ENCODE measurements at regions of chr6 and their contacts with region 1.

Region 1: GRCh38 chr6:52647199-52647598 is 23.7 kb upstream of the TMEM14A start:
- DNase-seq: no peak
- ATAC-seq: no peak
- H3K4me3 Mint-ChIP-seq: no peak overlapping the region
- H3K27ac Mint-ChIP-seq: no peak overlapping the region
- H3K4me1 Mint-ChIP-seq: peaks cover 3% of the 10 kb centered on the region
- H3K27me3 Mint-ChIP-seq: peaks cover 37% of the 10 kb centered on the region

Region 2: DNA sequence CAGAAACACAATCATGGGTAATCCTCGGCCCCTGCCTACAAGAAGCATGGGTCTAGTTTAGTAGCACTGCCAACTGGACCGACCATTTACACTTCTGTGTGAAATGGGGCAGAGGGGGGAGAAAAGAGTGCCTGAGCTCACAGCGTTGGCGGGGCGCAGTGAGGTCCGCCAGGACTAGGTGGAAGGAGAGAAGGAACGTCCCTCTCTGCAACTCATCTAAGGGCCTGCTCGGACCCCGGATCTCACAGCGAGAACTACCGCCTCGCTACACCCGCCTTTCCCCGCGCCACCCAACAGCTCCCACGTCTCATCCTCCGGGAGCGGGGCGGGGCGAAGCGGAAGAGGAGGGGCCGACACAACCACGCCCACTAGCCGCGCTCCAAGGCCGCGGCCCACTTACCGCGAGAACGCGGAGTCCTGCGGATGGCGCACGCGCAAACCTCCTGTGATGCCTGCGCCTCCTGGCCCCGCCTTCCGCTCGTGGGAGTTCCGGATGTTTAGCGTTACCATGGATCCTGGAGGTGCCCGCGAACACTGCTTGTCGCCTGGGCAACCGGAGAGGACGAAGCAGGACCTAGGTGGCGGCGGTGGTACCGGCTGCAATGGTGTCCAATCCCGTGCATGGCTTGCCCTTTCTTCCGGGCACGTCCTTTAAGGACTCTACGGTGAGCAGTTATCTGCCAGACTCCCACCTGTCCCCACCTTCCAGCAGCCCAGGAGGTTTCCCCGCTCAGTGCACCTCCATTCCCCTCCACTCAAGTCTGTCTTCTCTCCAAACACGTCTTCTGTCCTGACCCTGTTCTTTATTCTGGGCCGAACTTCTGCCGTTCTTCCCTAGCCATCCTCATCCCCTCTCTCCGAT is 227.2 kb before region 1 on chr6 and contains the start of gene EFHC1:
- CTCF ChIA-PET with region 1: interaction called, 73 read pairs
- POLR2A ChIA-PET with region 1: no interaction called
- DNase-seq: peak; percentile 99
- ATAC-seq: peak; percentile 93
- H3K4me3 Mint-ChIP-seq: no peak within 1 kb of the TSS
- H3K27ac Mint-ChIP-seq: peak within 1 kb of the TSS; percentile 75
- H3K4me1 Mint-ChIP-seq: peaks cover 27% of the 10 kb centered on the region
- H3K27me3 Mint-ChIP-seq: no peaks in the 10 kb centered on the region
- total RNA-seq, gene EFHC1: 1.4 to 2.5 TPM

Region 3: GRCh38 chr6:52475307-52475706 is 171.9 kb before region 1 on chr6:
- CTCF ChIA-PET with region 1: no interaction called
- POLR2A ChIA-PET with region 1: no interaction called
- DNase-seq: no peak
- ATAC-seq: no peak
- H3K4me3 Mint-ChIP-seq: no peak overlapping the region
- H3K27ac Mint-ChIP-seq: no peak overlapping the region
- H3K4me1 Mint-ChIP-seq: no peaks in the 10 kb centered on the region
- H3K27me3 Mint-ChIP-seq: peaks cover 3% of the 10 kb centered on the region

Region 4: DNA sequence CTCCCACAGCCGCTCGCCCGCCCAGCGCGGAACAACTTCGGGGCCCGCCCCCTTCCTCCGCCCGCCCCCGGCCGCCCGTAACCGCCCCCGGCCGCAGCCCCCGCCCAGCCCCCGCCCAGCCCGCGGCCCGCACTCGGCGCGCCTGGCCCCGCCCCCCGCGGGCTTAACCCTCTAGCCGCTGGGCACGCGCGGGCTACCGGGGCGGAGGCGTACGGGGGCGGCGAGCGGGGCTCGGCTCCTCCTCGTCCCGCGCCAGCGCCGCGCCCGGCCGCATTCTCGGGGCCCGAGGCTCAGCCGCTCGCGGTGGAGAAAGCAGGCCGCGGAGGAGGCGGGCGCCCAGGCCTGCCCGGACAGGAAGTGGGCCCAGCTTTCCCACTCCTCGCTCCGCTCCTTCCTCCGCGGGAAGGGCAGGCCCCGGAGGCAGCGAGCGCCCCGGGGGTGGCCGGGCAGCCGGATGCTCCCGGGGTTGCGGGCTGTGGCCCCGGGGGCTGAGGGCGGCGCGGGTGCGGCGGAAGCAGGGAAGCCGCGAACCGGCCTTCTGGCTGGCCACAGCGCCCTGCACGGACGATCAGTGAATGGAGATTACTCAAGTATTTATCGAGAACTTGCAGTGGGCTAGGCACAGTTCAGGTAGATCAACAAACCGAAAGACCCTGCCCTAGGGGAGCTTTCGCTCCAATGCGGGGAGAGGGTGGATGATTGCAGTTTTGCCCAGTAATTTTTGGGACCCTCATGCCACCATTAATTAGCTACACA is 70.0 kb before region 1 on chr6 and contains the start of gene TRAM2:
- CTCF ChIA-PET with region 1: interaction called, 13 read pairs
- POLR2A ChIA-PET with region 1: no interaction called
- DNase-seq: peak; percentile 66
- ATAC-seq: peak; percentile 79
- H3K4me3 Mint-ChIP-seq: peak within 1 kb of the TSS; percentile 73
- H3K27ac Mint-ChIP-seq: peak within 1 kb of the TSS; percentile 66
- H3K4me1 Mint-ChIP-seq: peaks cover 33% of the 10 kb centered on the region
- H3K27me3 Mint-ChIP-seq: peaks cover 45% of the 10 kb centered on the region
- total RNA-seq, gene TRAM2: 1.4 TPM

Region 5: DNA sequence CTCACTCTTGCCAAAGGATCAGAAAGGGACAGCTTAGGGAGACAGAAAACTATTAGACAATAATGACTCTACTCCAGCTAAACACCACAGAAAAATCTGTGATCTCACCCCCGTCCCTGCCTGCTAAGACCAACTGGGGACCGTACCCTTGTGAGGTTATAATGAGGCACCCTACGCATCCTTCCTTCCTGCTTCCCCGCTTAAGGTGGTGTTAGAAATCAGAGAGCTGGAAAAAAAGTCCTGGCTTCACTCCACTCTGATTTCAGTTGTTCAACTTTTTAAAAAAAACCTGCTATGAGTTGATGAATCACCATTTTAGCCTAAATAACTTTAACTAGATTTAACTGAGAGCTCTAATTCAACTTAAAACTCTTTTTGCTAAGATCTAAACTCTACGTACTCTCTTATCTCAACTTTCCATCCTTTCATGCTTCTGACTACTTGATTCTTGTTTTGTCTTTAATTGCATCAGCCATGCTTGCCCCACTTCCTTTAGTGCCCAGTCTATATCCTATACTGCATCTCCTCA is 12.1 kb before region 1 on chr6:
- CTCF ChIA-PET with region 1: interaction called, 27 read pairs
- POLR2A ChIA-PET with region 1: no interaction called
- DNase-seq: no peak
- ATAC-seq: no peak
- H3K4me3 Mint-ChIP-seq: no peak overlapping the region
- H3K27ac Mint-ChIP-seq: no peak overlapping the region
- H3K4me1 Mint-ChIP-seq: peaks cover 4% of the 10 kb centered on the region
- H3K27me3 Mint-ChIP-seq: peaks cover 7% of the 10 kb centered on the region

Region 6: DNA sequence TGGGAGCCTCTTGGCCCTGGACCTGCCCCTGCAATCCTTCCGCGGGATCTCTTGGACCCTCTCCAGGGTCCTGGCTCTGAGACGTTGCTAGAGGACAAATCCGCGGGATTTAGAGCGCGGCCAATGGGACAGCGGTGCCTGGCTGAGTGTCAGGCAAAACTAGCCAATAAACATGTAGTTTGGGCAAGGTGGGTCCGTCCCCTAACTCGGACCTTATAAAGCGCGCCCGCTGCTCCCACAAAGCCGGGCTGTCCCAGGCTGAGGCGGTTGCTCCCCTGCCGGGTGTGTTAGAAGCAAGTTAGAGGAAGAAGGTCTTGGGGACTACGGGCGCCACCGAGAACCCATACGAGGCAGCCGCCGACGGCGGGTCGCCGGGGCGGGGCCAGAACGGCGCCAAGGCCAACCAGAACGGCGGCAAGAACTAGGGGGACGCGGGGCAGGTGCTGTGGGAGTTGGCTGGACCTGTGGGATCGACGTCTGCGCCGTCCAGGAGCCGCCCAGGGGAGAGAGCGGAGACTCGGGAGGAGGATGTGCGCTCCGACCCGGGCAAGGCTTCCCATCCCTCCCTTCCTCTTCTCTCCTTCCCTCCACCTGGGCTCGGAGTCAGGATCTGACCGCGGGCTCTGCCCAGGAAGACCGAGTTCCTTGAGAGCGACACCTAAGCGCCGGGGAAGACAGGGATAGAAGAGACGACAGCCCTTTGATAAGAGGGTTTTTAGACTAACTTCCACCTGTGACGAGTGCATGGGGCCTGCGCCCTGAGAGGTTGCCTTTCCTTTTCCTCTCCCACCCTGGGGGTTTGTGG is 17.2 kb after region 1 on chr6:
- CTCF ChIA-PET with region 1: interaction called, 71 read pairs
- POLR2A ChIA-PET with region 1: no interaction called
- DNase-seq: peak; percentile 84
- ATAC-seq: peak; percentile 97
- H3K4me3 Mint-ChIP-seq: no peak overlapping the region
- H3K27ac Mint-ChIP-seq: no peak overlapping the region
- H3K4me1 Mint-ChIP-seq: peaks cover 1% of the 10 kb centered on the region
- H3K27me3 Mint-ChIP-seq: no peaks in the 10 kb centered on the region

Region 7: GRCh38 chr6:52672422-52673025 is 25.3 kb after region 1 on chr6:
- CTCF ChIA-PET with region 1: interaction called, 15 read pairs
- POLR2A ChIA-PET with region 1: no interaction called
- DNase-seq: no peak
- ATAC-seq: no peak
- H3K4me3 Mint-ChIP-seq: peak overlapping the region; percentile 89
- H3K27ac Mint-ChIP-seq: no peak overlapping the region
- H3K4me1 Mint-ChIP-seq: peaks cover 38% of the 10 kb centered on the region
- H3K27me3 Mint-ChIP-seq: no peaks in the 10 kb centered on the region